ENCODE measurements at regions of chrX and their contacts with region 1.

Region 1: GRCh38 chrX:94831364-94831763 is 1157.4 kb downstream of the FAM133A start:
- DNase-seq: no peak

Region 2: GRCh38 chrX:94686071-94686470 is 145.3 kb before region 1 on chrX:
- intact Hi-C with region 1: no loop called
- DNase-seq: no peak

Region 3: DNA sequence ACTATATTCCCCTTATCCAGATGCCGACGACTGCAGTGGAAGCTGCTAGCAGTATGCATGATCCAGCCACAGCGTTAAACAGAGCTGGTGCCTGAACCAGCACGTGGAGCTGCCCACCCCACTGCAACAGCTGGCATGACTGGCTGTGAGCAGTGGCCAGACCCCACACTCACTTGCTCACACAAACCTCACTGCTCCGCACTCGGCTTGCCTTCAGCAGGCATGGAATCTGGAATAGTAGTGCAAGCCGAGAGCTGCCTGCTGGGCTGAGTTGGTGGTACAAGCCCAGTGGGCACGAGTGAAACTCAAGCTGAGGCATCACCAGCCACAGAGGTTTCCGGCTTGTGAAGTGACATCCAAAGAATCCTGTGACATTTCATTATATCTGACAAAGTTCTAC is 40.3 kb after region 1 on chrX:
- intact Hi-C with region 1: no loop called
- DNase-seq: no peak

Region 4: GRCh38 chrX:94942603-94943002 is 111.2 kb after region 1 on chrX:
- intact Hi-C with region 1: no loop called
- DNase-seq: no peak

Region 5: DNA sequence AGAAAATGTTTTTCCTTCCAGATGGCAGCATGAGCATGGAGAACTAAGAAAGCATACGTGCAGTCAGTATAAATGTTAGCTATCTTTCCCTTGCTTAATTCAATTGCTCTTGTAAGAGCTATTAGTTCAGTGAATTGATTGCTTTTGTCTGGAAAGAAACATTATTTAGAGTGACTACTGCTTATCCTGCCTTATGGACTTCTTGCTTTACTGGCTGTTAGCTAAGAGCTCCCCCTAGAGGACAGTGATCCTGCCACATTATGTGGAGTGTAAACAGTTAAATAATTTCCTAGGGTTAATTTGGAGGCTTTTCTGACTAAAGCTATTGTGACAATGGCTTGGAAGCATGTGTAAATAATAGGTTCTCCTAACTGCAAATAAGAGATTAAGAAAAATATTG is 245.1 kb after region 1 on chrX:
- intact Hi-C with region 1: loop called (anchors 5 kb)
- DNase-seq: no peak

Measured in cardiac septum (tissue), 1 donor.